CD8-positive, alpha-beta memory T cell (primary cell): ENCODE measurements at regions of chr13 and their contacts with region 1.

Region 1: DNA sequence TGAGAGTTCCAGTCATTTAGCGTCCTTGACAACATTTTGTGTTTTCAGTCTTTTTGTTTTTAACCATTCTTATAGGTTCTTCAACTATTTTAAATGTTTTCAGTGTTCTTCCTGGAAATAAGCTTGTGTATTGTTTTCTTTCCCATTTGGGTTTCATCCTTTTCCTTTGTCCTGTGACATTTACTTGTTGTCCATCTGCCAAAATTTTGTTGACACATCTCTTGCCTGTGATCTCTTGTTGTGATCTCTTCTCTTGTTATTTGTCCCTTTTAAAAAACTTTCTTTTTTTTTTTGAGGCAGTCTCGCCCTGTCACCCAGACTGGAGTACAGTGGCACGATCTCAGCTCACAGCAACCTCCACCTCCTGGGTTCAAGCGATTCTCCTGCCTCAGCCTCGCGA is 96.5 kb downstream of the PDS5B start:
- DNase-seq: no peak
- H3K4me3 ChIP-seq: no peak overlapping the region
- H3K4me3 Mint-ChIP-seq: no peak overlapping the region
- H3K27ac ChIP-seq: no peak overlapping the region
- H3K27ac Mint-ChIP-seq: no peak overlapping the region
- H3K4me1 ChIP-seq: no peaks in the 10 kb centered on the region
- H3K4me1 Mint-ChIP-seq: no peaks in the 10 kb centered on the region
- H3K27me3 ChIP-seq: no peaks in the 10 kb centered on the region
- H3K27me3 Mint-ChIP-seq: no peaks in the 10 kb centered on the region

Region 2: DNA sequence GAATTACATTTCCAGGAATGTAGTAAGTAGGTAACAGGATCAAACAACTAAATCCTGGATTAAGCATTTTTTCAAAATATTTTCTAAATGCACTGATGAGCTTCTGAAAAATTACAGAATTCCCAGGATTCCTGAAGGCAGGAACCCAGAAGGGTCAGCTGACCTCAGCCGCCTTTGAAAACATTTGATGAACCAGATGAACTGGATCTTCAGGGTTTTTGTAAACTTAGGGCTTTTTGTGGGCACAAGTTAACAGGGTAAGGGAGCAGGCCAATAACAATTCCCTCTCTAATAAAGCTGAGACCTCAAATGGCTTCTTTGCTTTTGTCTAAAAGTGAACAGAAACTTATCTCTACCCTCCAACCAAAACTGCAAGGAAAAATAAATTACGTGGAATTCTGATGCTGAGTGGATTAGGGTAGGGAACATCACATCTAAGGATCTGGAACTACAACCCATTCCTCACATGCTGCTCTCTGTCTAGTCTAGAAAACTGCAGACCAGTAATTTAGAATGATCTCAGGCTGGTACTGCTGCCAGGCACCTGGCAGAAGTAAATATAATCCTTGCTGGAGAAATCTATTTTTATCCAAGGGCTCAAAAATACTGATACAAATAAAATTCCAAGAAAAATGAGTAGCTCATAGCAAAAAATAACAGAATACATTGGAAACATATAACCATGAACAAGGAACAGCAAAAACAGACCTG is 206.6 kb before region 1 on chr13:
- CTCF ChIA-PET with region 1: no interaction called
- POLR2A ChIA-PET with region 1: interaction called, 15 read pairs
- DNase-seq: no peak
- H3K4me3 ChIP-seq: no peak overlapping the region
- H3K4me3 Mint-ChIP-seq: no peak overlapping the region
- H3K27ac ChIP-seq: no peak overlapping the region
- H3K27ac Mint-ChIP-seq: no peak overlapping the region
- H3K4me1 ChIP-seq: no peaks in the 10 kb centered on the region
- H3K4me1 Mint-ChIP-seq: no peaks in the 10 kb centered on the region
- H3K27me3 ChIP-seq: no peaks in the 10 kb centered on the region
- H3K27me3 Mint-ChIP-seq: peaks cover 0 to 1% of the 10 kb centered on the region in 2 donors

Region 3: GRCh38 chr13:32594157-32594738 is 88.5 kb before region 1 on chr13:
- CTCF ChIA-PET with region 1: no interaction called
- POLR2A ChIA-PET with region 1: no interaction called
- DNase-seq: no peak
- H3K4me3 ChIP-seq: no peak overlapping the region
- H3K4me3 Mint-ChIP-seq: no peak overlapping the region
- H3K27ac ChIP-seq: no peak overlapping the region
- H3K27ac Mint-ChIP-seq: peak overlapping the region in 1 of 8 donors; percentile 2
- H3K4me1 ChIP-seq: peaks cover 20% of the 10 kb centered on the region
- H3K4me1 Mint-ChIP-seq: peaks cover 51 to 69% (median 69%) of the 10 kb centered on the region in 3 donors
- H3K27me3 ChIP-seq: no peaks in the 10 kb centered on the region
- H3K27me3 Mint-ChIP-seq: no peaks in the 10 kb centered on the region

Region 4: GRCh38 chr13:32650705-32651311 is 31.9 kb before region 1 on chr13:
- CTCF ChIA-PET with region 1: no interaction called
- POLR2A ChIA-PET with region 1: no interaction called
- DNase-seq: peak; percentile 28 to 68 (median 36)
- H3K4me3 ChIP-seq: no peak overlapping the region
- H3K4me3 Mint-ChIP-seq: no peak overlapping the region
- H3K27ac ChIP-seq: no peak overlapping the region
- H3K27ac Mint-ChIP-seq: peak overlapping the region in 1 of 8 donors; percentile 81
- H3K4me1 ChIP-seq: no peaks in the 10 kb centered on the region
- H3K4me1 Mint-ChIP-seq: peaks cover 37 to 61% (median 53%) of the 10 kb centered on the region in 3 donors
- H3K27me3 ChIP-seq: no peaks in the 10 kb centered on the region
- H3K27me3 Mint-ChIP-seq: no peaks in the 10 kb centered on the region

Region 5: GRCh38 chr13:32663660-32664059 is 19.1 kb before region 1 on chr13:
- CTCF ChIA-PET with region 1: no interaction called
- POLR2A ChIA-PET with region 1: no interaction called
- DNase-seq: no peak
- H3K4me3 ChIP-seq: no peak overlapping the region
- H3K4me3 Mint-ChIP-seq: no peak overlapping the region
- H3K27ac ChIP-seq: no peak overlapping the region
- H3K27ac Mint-ChIP-seq: no peak overlapping the region
- H3K4me1 ChIP-seq: no peaks in the 10 kb centered on the region
- H3K4me1 Mint-ChIP-seq: peaks cover 0 to 8% (median 2%) of the 10 kb centered on the region in 3 donors
- H3K27me3 ChIP-seq: no peaks in the 10 kb centered on the region
- H3K27me3 Mint-ChIP-seq: no peaks in the 10 kb centered on the region